ENCODE measurements at regions of chr12 and their contacts with region 1.

Region 1: GRCh38 chr12:127570793-127571360 is 696.1 kb upstream of the TMEM132C start:
- DNase-seq: no peak
- H3K4me3 ChIP-seq: no peak overlapping the region
- H3K27me3 ChIP-seq: peaks cover 1% of the 10 kb centered on the region; the same call in 1 of the 2 replicates
- CTCF ChIP-seq: no peak

Region 2: DNA sequence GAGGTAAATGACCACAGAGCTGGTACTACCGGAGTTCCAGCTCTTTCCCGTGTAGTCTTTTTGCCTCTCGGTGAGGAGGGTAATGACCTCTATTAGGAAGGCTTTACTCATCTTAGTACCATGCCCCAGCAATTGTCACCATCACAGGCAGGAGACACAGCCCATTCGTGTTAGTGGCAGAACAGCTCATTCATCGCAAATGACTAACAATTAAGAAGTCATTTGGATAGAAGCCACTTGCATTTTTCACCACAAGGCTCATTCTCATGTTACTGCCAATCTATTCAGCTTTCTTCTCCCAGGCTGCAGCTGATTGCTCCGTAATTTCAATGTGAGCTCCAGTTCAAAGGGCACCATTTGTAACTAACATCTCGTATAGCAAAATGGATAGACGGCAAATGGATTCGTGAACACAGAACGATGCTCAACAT is 22.7 kb before region 1 on chr12:
- CTCF ChIA-PET with region 1: no interaction called
- POLR2A ChIA-PET with region 1: no interaction called
- DNase-seq: peak; percentile 78
- H3K4me3 ChIP-seq: no peak overlapping the region
- H3K27me3 ChIP-seq: no peaks in the 10 kb centered on the region
- CTCF ChIP-seq: no peak

Region 3: DNA sequence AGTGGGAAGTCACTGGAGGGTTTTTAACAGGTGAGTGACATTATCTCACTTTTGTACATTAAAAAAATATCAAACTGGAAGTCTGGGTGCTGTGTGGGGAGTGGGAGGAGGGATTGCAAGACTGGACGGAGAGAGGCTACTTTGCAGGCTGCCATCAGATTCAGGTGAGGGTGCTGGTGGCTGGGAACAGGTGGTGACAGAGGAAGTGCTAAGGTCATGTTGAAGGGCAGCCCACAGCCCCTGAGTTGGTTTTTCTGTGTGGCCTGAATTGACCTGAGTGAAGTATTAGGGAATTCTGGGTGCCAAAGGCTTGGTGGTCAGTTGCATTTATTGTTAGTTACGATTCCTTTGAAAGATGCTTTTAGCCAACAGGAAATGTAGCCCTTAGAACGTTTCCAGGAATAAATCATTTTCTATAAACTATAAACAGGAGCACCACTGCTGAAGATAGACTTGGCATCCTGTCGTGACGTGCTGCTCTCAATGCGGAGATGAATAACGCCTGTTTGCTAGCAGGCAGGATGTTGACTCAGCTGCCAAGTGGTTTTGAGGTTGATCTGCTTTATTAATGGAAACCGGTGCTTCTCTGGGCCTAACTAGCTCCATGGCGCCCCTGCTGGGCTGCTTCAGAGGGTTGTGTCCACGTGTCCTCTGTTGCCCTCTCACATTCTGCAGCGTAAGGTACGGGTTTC is 11.4 kb before region 1 on chr12:
- CTCF ChIA-PET with region 1: interaction called, 10 read pairs
- POLR2A ChIA-PET with region 1: no interaction called
- DNase-seq: peak; percentile 94
- H3K4me3 ChIP-seq: no peak overlapping the region
- H3K27me3 ChIP-seq: no peaks in the 10 kb centered on the region
- CTCF ChIP-seq: peak; percentile 85

Measured in BJ (cell line).